ENCODE measurements at regions of chr18 and their contacts with region 1.

Region 1: DNA sequence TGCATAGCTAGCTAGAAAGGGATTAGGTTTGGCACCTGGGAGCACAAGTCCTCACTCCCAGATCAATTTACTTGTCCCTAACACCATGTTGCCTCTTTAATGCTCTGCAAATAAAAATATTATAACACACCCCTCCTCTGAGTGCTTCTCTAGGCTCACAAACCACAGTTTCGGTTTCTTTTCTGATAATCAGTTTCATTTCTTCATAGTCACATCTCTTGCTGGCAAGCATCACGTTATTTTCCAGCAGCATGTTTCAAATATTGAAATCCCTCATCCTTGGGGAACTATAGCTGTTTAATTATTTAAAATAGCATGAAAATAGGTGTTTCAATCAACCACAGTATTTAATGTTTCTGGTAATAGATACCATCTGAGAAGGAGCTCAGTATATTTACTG is 13.9 kb upstream of the SMCHD1 start:
- DNase-seq: peak in 7 of 9 donors; percentile 38 to 58 (median 52)
- ATAC-seq: peak; percentile 18
- H3K4me3 ChIP-seq: peak overlapping the region; percentile 36
- H3K4me3 Mint-ChIP-seq: peak overlapping the region in 9 of 10 donors; percentile 73 to 87 (median 84)
- H3K27ac ChIP-seq: peak overlapping the region; percentile 83
- H3K27ac Mint-ChIP-seq: peak overlapping the region in 3 of 9 donors; percentile 91 to 99 (median 95)
- H3K4me1 ChIP-seq: peaks cover 70 to 73% of the 10 kb centered on the region in 2 donors
- H3K4me1 Mint-ChIP-seq: peaks cover 0 to 54% (median 47%) of the 10 kb centered on the region in 7 donors
- H3K27me3 ChIP-seq: no peaks in the 10 kb centered on the region
- H3K27me3 Mint-ChIP-seq: no peaks in the 10 kb centered on the region

Region 2: DNA sequence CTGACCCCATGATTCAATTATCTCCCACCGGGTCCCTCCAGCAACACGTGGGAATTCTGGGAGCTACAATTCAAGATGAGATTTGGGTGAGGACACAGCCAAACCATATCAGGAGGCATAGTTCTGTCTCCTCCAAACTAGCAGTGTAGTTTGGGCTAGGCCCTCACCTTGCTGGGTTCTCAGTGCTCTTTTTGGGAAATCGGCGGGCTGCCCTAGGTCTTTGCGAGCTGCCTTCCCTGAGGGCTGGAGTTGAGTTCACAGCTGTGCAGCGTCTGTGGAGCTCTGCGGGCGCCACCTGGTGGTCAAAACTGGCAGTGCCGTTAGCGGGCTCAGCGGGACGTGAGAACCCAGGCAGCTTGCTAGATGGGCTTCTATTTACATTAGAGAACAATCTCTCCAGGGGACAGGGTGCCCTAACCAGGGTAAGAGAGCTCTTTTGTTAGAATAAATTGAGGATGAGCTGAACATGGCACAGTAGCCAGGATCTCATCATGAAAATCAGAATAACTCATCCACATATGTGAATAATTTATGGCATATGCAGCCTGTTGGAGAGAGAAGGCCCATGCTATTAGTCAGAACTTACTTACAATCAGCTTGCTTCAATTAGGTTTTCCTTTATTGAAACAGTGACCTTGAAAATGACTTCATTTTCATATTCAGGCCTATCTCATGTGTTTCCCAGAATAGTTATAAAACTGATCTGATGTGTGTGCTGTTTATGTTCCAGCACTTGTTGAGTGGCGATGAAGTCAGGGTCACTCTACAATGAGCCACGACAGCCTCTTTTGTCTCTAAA is 1802.2 kb before region 1 on chr18:
- CTCF ChIA-PET with region 1: interaction called, 10 read pairs
- POLR2A ChIA-PET with region 1: no interaction called
- intact Hi-C with region 1: no loop called
- DNase-seq: peak; percentile 55 to 89 (median 80)
- ATAC-seq: peak; percentile 98
- H3K4me3 ChIP-seq: no peak overlapping the region
- H3K4me3 Mint-ChIP-seq: peak overlapping the region in 1 of 10 donors; percentile 15
- H3K27ac ChIP-seq: no peak overlapping the region
- H3K27ac Mint-ChIP-seq: peak overlapping the region in 2 of 9 donors; percentile 19 to 43
- H3K4me1 ChIP-seq: peaks cover 0 to 4% of the 10 kb centered on the region in 2 donors
- H3K4me1 Mint-ChIP-seq: peaks cover 0 to 16% (median 4%) of the 10 kb centered on the region in 7 donors
- H3K27me3 ChIP-seq: no peaks in the 10 kb centered on the region
- H3K27me3 Mint-ChIP-seq: peaks cover 0 to 18% (median 7%) of the 10 kb centered on the region in 5 donors

Region 3: GRCh38 chr18:2442791-2443398 is 198.7 kb before region 1 on chr18:
- CTCF ChIA-PET with region 1: no interaction called
- POLR2A ChIA-PET with region 1: no interaction called
- intact Hi-C with region 1: no loop called
- DNase-seq: no peak
- ATAC-seq: no peak
- H3K4me3 ChIP-seq: no peak overlapping the region
- H3K4me3 Mint-ChIP-seq: no peak overlapping the region
- H3K27ac ChIP-seq: no peak overlapping the region
- H3K27ac Mint-ChIP-seq: no peak overlapping the region
- H3K4me1 ChIP-seq: no peaks in the 10 kb centered on the region
- H3K4me1 Mint-ChIP-seq: peaks cover 0 to 6% (median 0%) of the 10 kb centered on the region in 7 donors
- H3K27me3 ChIP-seq: no peaks in the 10 kb centered on the region
- H3K27me3 Mint-ChIP-seq: peaks cover 0 to 17% (median 6%) of the 10 kb centered on the region in 5 donors

Region 4: GRCh38 chr18:2571200-2572143 is 70.2 kb before region 1 on chr18 and contains the starts of genes METTL4 and NDC80:
- CTCF ChIA-PET with region 1: interaction called, 3 read pairs
- POLR2A ChIA-PET with region 1: interaction called, 58 read pairs
- intact Hi-C with region 1: loop called (anchors 1 kb)
- DNase-seq: peak; percentile 70 to 90 (median 82)
- ATAC-seq: peak; percentile 87
- H3K4me3 ChIP-seq: peak within 1 kb of the TSS; percentile 88
- H3K4me3 Mint-ChIP-seq: peak within 1 kb of the TSS; percentile 96 to 100 (median 99)
- H3K27ac ChIP-seq: peak within 1 kb of the TSS; percentile 97
- H3K27ac Mint-ChIP-seq: peak within 1 kb of the TSS; percentile 98 to 100 (median 100)
- H3K4me1 ChIP-seq: peaks cover 10 to 13% of the 10 kb centered on the region in 2 donors
- H3K4me1 Mint-ChIP-seq: peaks cover 38 to 63% (median 59%) of the 10 kb centered on the region in 7 donors
- H3K27me3 ChIP-seq: no peaks in the 10 kb centered on the region
- H3K27me3 Mint-ChIP-seq: no peaks in the 10 kb centered on the region
- total RNA-seq, gene METTL4: 13.8 to 32.5 (median 22.8) TPM
- total RNA-seq, gene NDC80: 2.4 to 53.6 (median 2.7) TPM

Region 5: DNA sequence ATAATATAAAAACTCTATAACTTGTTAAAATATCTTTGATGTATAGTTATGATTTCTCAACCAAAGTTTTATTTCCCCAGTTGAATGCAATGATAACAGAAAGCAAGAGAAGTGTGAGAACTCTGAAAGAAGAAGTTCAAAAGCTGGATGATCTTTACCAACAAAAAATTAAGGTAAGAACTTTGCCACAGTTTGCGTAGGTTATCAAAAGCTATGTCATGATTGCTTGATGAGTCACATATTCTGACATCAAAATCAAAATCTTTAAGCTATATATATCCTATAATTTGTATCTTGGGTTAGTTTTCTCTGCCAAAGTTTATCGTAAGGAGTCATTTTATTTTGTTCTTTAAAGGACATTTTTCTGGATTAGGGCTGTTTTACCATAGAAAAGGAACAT is 35.3 kb before region 1 on chr18:
- CTCF ChIA-PET with region 1: interaction called, 22 read pairs
- POLR2A ChIA-PET with region 1: interaction called, 261 read pairs
- intact Hi-C with region 1: loop called (anchors 1 kb)
- DNase-seq: peak in 6 of 9 donors; percentile 42 to 65 (median 53)
- ATAC-seq: peak; percentile 73
- H3K4me3 ChIP-seq: no peak overlapping the region
- H3K4me3 Mint-ChIP-seq: peak overlapping the region; percentile 16 to 84 (median 70)
- H3K27ac ChIP-seq: peak overlapping the region; percentile 73
- H3K27ac Mint-ChIP-seq: peak overlapping the region; percentile 79 to 94 (median 87)
- H3K4me1 ChIP-seq: peaks cover 28 to 35% of the 10 kb centered on the region in 2 donors
- H3K4me1 Mint-ChIP-seq: peaks cover 22 to 79% (median 64%) of the 10 kb centered on the region in 7 donors
- H3K27me3 ChIP-seq: no peaks in the 10 kb centered on the region
- H3K27me3 Mint-ChIP-seq: no peaks in the 10 kb centered on the region

Region 6: DNA sequence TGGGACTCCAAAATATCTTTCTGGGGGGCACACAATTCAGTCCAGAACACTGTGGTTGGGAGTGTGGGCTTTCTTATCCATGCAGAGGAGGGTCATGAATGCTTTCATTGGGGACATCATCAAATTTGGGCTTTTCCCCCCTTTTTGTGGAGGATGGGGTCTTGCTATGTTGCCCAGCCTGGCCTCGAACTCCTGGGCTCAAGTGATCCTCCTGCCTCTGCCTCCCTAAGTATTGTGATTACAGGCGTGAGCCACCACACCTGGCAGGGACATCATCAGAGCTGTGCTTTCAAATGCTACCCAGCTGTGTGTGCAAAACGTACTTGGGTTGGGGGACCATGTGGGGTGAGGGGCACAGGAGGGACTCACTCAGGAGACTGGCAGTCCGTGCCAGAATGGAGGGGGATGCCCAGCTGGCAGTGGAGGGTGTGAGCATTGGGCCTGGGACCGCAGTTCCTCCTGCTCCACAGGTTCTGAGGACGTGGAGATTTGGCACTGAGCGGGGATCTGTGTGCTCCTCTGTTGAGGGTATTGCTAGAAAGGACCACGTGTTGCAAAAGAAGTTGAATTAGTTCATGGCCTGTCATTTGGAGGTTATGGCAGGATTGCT is 229.6 kb after region 1 on chr18:
- CTCF ChIA-PET with region 1: no interaction called
- POLR2A ChIA-PET with region 1: no interaction called
- intact Hi-C with region 1: no loop called
- DNase-seq: no peak
- ATAC-seq: no peak
- H3K4me3 ChIP-seq: no peak overlapping the region
- H3K4me3 Mint-ChIP-seq: no peak overlapping the region
- H3K27ac ChIP-seq: no peak overlapping the region
- H3K27ac Mint-ChIP-seq: peak overlapping the region in 1 of 9 donors; percentile 30
- H3K4me1 ChIP-seq: no peaks in the 10 kb centered on the region
- H3K4me1 Mint-ChIP-seq: peaks cover 0 to 18% (median 2%) of the 10 kb centered on the region in 7 donors
- H3K27me3 ChIP-seq: no peaks in the 10 kb centered on the region
- H3K27me3 Mint-ChIP-seq: peaks cover 0 to 11% (median 0%) of the 10 kb centered on the region in 5 donors

Measured in naive thymus-derived CD4-positive, alpha-beta T cell (primary cell).